GM12878 (cell line): ENCODE measurements at regions of chr15 and their contacts with region 1.

Region 1: GRCh38 chr15:51192521-51193280 is 98.0 kb upstream of the TNFAIP8L3 start:
- DNase-seq: peak; percentile 20
- ATAC-seq: peak; percentile 97
- H3K4me3 ChIP-seq: no peak overlapping the region
- H3K27ac ChIP-seq: no peak overlapping the region
- H3K4me1 ChIP-seq: no peaks in the 10 kb centered on the region
- H3K27me3 ChIP-seq: no peaks in the 10 kb centered on the region; a peak in 2 of 4 replicates
- CTCF ChIP-seq: peak; percentile 91 to 96 (median 92)
- EP300 ChIP-seq: no peak
- POLR2A ChIP-seq: no peak
- RAD21 ChIP-seq: peak; percentile 79

Region 2: GRCh38 chr15:50850003-50850402 is 342.7 kb before region 1 on chr15:
- CTCF ChIA-PET with region 1: no interaction called
- POLR2A ChIA-PET with region 1: no interaction called
- RAD21 ChIA-PET with region 1: no interaction called
- SMC1A ChIA-PET with region 1: no interaction called
- in situ Hi-C with region 1: no loop called
- intact Hi-C with region 1: no loop called
- DNase-seq: no peak
- ATAC-seq: no peak
- H3K4me3 ChIP-seq: no peak overlapping the region
- H3K27ac ChIP-seq: no peak overlapping the region
- H3K4me1 ChIP-seq: peaks cover 10% of the 10 kb centered on the region
- H3K27me3 ChIP-seq: no peaks in the 10 kb centered on the region
- CTCF ChIP-seq: no peak
- EP300 ChIP-seq: no peak
- POLR2A ChIP-seq: no peak
- RAD21 ChIP-seq: no peak

Region 3: GRCh38 chr15:51132384-51133139 is 60.1 kb before region 1 on chr15:
- CTCF ChIA-PET with region 1: interaction called, 14 read pairs
- POLR2A ChIA-PET with region 1: no interaction called
- RAD21 ChIA-PET with region 1: interaction called, 6 read pairs
- SMC1A ChIA-PET with region 1: no interaction called
- in situ Hi-C with region 1: no loop called
- intact Hi-C with region 1: no loop called
- DNase-seq: no peak
- ATAC-seq: peak; percentile 36; the same call in 2 of the 3 replicates
- H3K4me3 ChIP-seq: no peak overlapping the region
- H3K27ac ChIP-seq: no peak overlapping the region
- H3K4me1 ChIP-seq: no peaks in the 10 kb centered on the region; the same call in 1 of the 2 replicates
- H3K27me3 ChIP-seq: peaks cover 0 to 1% of the 10 kb centered on the region in 2 experiments; a peak in 2 of 4 replicates
- CTCF ChIP-seq: peak; percentile 57 to 80 (median 79)
- EP300 ChIP-seq: no peak
- POLR2A ChIP-seq: no peak
- RAD21 ChIP-seq: peak; percentile 39; the same call in 1 of the 2 replicates

Region 4: DNA sequence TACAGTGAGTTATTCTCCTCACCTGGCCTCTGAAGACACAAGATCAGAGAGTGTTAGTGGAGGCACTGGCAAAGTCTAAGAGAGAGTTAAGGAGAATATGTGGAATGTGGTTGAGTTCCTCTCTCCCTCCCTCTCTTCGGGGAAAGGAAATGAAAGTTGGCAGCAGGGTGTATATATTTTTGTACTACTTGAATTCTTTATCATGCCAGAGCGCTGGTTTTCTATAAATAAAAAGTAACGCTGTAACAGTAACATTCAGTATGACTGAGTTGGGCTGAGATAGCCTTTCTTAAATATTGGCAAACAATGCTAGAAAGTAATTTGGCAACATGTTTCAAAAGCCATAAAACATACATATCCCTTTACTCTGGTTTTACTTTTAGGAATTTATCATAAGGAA is 20.5 kb before region 1 on chr15:
- CTCF ChIA-PET with region 1: interaction called, 10 read pairs
- POLR2A ChIA-PET with region 1: no interaction called
- RAD21 ChIA-PET with region 1: no interaction called
- SMC1A ChIA-PET with region 1: interaction called, 4 read pairs
- in situ Hi-C with region 1: no loop called
- intact Hi-C with region 1: no loop called
- DNase-seq: no peak
- ATAC-seq: no peak
- H3K4me3 ChIP-seq: no peak overlapping the region
- H3K27ac ChIP-seq: no peak overlapping the region
- H3K4me1 ChIP-seq: no peaks in the 10 kb centered on the region
- H3K27me3 ChIP-seq: no peaks in the 10 kb centered on the region
- CTCF ChIP-seq: no peak
- EP300 ChIP-seq: no peak
- POLR2A ChIP-seq: no peak
- RAD21 ChIP-seq: no peak

Region 5: DNA sequence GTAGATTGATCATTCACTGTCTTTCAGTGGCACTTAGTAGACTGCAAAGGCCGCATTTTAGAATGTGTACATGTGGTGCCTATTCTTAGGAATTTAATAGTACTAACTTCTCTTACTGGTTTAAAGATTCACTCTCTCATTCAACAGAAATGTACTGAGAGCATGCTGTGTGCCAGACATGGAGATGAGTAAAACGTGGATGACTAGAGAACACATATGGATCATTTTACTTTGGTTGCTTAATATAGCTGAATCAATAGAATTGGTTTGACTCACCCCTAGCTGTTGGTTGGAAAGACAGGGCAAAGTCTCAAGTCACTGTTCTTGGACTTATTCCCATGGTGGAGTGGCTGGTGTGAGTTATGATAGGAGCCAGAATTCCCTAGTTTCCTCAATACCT is 11.1 kb after region 1 on chr15:
- CTCF ChIA-PET with region 1: interaction called, 11 read pairs
- POLR2A ChIA-PET with region 1: interaction called, 3 read pairs
- RAD21 ChIA-PET with region 1: interaction called, 5 read pairs
- SMC1A ChIA-PET with region 1: interaction called, 3 read pairs
- in situ Hi-C with region 1: no loop called
- intact Hi-C with region 1: no loop called
- DNase-seq: no peak
- ATAC-seq: no peak
- H3K4me3 ChIP-seq: no peak overlapping the region
- H3K27ac ChIP-seq: no peak overlapping the region
- H3K4me1 ChIP-seq: no peaks in the 10 kb centered on the region
- H3K27me3 ChIP-seq: peaks cover 0 to 4% of the 10 kb centered on the region in 2 experiments; a peak in 1 of 4 replicates
- CTCF ChIP-seq: no peak
- EP300 ChIP-seq: no peak
- POLR2A ChIP-seq: no peak
- RAD21 ChIP-seq: no peak